Heart right ventricle (tissue), 16 donors: ENCODE measurements at regions of chr1 and their contacts with region 1.

Region 1: GRCh38 chr1:17419626-17420328 is 19.7 kb downstream of the RCC2 start:
- DNase-seq: peak; percentile 71 to 81
- ATAC-seq: peak; percentile 77 to 87 (median 84)
- H3K4me3 ChIP-seq: peak overlapping the region in 2 of 10 donors; percentile 7 to 18
- H3K27ac ChIP-seq: peak overlapping the region in 6 of 10 donors; percentile 24 to 72 (median 58)
- H3K4me1 ChIP-seq: peaks cover 5 to 32% (median 20%) of the 10 kb centered on the region in 9 donors
- H3K27me3 ChIP-seq: no peaks in the 10 kb centered on the region
- CTCF ChIP-seq: peak in 8 of 9 donors; percentile 98 to 100 (median 100)

Region 2: GRCh38 chr1:17161137-17161740 is 258.5 kb before region 1 on chr1:
- intact Hi-C with region 1: no loop called
- DNase-seq: no peak
- ATAC-seq: no peak
- H3K4me3 ChIP-seq: no peak overlapping the region
- H3K27ac ChIP-seq: no peak overlapping the region
- H3K4me1 ChIP-seq: no peaks in the 10 kb centered on the region
- H3K27me3 ChIP-seq: peaks cover 0 to 42% (median 5%) of the 10 kb centered on the region in 7 donors
- CTCF ChIP-seq: no peak

Region 3: GRCh38 chr1:17287130-17287776 is 132.5 kb before region 1 on chr1:
- intact Hi-C with region 1: no loop called
- DNase-seq: no peak
- ATAC-seq: no peak
- H3K4me3 ChIP-seq: no peak overlapping the region
- H3K27ac ChIP-seq: no peak overlapping the region
- H3K4me1 ChIP-seq: peaks cover 0 to 22% (median 0%) of the 10 kb centered on the region in 9 donors
- H3K27me3 ChIP-seq: peaks cover 0 to 61% (median 32%) of the 10 kb centered on the region in 7 donors
- CTCF ChIP-seq: no peak

Region 4: DNA sequence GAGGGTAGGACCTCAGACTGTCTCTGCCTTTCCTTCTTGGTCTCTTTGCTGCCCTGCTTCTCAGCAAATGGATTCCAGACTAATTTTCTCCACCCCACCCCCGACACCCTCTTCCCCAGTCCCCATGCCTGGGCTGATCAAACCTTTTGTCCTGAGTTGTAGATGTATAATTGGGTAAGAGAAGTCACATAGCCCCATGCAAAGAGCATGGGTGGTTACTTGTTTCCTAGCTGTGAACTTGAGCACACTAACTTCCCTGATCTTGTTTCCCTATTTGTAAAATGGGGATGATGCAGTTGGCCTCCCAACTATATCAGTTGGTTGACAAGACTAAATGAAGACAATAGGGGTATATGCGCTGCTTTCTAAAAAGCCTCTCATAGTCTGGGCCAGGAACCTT is 38.6 kb before region 1 on chr1:
- intact Hi-C with region 1: no loop called
- DNase-seq: no peak
- ATAC-seq: no peak
- H3K4me3 ChIP-seq: no peak overlapping the region
- H3K27ac ChIP-seq: no peak overlapping the region
- H3K4me1 ChIP-seq: no peaks in the 10 kb centered on the region
- H3K27me3 ChIP-seq: peaks cover 0 to 54% (median 26%) of the 10 kb centered on the region in 7 donors
- CTCF ChIP-seq: no peak

Region 5: DNA sequence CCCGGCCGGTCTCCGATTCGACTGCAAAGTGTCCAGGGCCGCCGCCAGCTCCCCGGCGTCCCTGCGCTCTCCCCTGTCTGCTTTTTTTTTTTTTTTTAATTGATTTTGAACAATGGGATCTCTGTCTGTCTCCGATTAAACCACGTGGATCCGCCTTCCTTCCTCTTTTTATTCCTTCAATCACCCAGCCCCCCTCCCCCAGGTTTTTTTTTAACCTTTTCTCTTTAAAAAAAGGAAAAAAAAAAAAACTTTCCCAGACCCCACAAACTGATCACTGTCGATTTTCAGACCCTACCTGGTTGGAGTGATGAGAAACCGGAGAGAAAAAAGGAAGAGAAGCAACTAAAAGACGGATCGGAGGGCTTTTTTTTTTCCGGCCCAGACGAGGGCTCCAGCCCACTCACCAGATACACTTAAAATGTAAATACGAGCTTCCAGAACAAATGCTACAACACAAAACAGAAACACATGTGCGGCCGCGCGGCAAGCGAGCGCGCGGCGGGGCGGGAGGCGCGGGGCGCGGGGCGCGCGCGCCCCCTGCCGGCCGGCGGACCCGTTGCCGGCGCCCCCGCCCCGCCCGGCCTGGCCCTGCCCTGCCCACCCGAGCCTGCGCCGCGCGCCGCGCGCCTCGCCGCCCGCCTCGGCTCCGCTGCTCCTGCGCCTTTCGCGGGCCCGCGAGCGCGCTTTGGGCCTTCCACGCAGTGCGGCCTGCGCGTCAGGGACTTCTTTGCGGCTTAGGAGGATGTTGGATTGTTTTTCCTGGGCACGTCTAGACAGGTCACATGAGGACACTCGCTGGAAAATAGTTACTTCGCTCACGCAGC is 19.7 kb after region 1 on chr1 and contains the start of gene RCC2:
- intact Hi-C with region 1: loop called in 2 of 10 experiments (anchors 1 kb)
- DNase-seq: peak; percentile 67 to 80
- ATAC-seq: peak; percentile 50 to 86 (median 70)
- H3K4me3 ChIP-seq: peak within 1 kb of the TSS; percentile 51 to 92 (median 79)
- H3K27ac ChIP-seq: peak within 1 kb of the TSS; percentile 77 to 94 (median 82)
- H3K4me1 ChIP-seq: peaks cover 0 to 28% (median 21%) of the 10 kb centered on the region in 9 donors
- H3K27me3 ChIP-seq: no peaks in the 10 kb centered on the region
- CTCF ChIP-seq: peak in 1 of 9 donors; percentile 16
- total RNA-seq, gene RCC2: 9.0 to 25.3 (median 11.4) TPM

Region 6: DNA sequence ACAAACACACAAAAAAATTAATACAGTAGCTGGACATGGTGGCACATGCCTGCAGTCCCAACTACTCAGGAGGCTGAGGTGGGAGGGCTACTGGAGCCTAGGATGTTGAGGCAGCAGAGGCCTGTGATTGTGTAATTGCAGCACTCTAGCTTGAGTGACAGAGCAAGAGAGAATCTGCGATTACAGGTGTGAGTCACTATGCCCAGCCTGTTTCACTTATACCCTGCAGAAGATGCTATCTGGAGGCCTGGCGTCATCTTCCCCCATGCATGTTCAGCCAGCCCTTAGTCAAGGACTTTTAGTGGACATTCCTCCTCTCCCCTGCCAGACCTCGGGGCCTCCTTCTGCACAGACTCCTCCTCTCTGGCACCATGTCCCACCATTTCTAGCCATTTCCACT is 56.0 kb after region 1 on chr1:
- intact Hi-C with region 1: loop called in 5 of 10 experiments (anchors 5 to 10 kb)
- DNase-seq: peak in 1 of 2 donors; percentile 9
- ATAC-seq: peak in 6 of 8 donors; percentile 70 to 98 (median 93)
- H3K4me3 ChIP-seq: no peak overlapping the region
- H3K27ac ChIP-seq: no peak overlapping the region
- H3K4me1 ChIP-seq: peaks cover 0 to 4% (median 0%) of the 10 kb centered on the region in 9 donors
- H3K27me3 ChIP-seq: peaks cover 0 to 3% (median 0%) of the 10 kb centered on the region in 7 donors
- CTCF ChIP-seq: no peak

Region 7: DNA sequence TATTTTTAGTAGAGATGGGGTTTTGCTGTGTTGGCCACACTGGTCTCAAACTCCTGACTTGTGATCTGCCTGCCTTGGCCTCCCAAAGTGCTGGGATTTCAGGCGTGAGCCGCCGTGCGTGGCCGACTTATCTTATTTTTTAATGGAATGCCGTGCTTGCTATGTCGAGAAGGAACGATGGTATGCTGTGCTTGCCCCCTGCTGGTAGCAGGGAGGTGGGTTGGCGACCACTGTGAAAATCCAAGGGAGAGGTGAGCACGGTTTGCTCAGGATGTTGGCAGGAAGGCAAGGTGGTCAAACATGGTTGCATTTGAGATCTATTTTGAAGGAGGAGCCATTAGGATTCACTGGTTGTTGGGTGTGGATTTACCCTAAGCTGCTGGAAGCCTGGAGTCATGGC is 65.5 kb after region 1 on chr1:
- intact Hi-C with region 1: loop called in 4 of 10 experiments (anchors 5 to 10 kb)
- DNase-seq: no peak
- ATAC-seq: peak in 1 of 8 donors; percentile 43
- H3K4me3 ChIP-seq: no peak overlapping the region
- H3K27ac ChIP-seq: no peak overlapping the region
- H3K4me1 ChIP-seq: no peaks in the 10 kb centered on the region
- H3K27me3 ChIP-seq: peaks cover 0 to 6% (median 4%) of the 10 kb centered on the region in 7 donors
- CTCF ChIP-seq: peak in 6 of 9 donors; percentile 24 to 42 (median 40)

Region 8: GRCh38 chr1:17606826-17607440 is 187.2 kb after region 1 on chr1:
- intact Hi-C with region 1: loop called in 5 of 10 experiments (anchors 5 to 10 kb)
- DNase-seq: peak; percentile 73 to 78
- ATAC-seq: peak; percentile 10 to 75 (median 60)
- H3K4me3 ChIP-seq: no peak overlapping the region
- H3K27ac ChIP-seq: peak overlapping the region; percentile 15 to 93 (median 82)
- H3K4me1 ChIP-seq: peaks cover 10 to 25% (median 21%) of the 10 kb centered on the region in 9 donors
- H3K27me3 ChIP-seq: no peaks in the 10 kb centered on the region
- CTCF ChIP-seq: peak; percentile 71 to 93 (median 90)